ENCODE measurements at regions of chr6 and their contacts with region 1.

Region 1: DNA sequence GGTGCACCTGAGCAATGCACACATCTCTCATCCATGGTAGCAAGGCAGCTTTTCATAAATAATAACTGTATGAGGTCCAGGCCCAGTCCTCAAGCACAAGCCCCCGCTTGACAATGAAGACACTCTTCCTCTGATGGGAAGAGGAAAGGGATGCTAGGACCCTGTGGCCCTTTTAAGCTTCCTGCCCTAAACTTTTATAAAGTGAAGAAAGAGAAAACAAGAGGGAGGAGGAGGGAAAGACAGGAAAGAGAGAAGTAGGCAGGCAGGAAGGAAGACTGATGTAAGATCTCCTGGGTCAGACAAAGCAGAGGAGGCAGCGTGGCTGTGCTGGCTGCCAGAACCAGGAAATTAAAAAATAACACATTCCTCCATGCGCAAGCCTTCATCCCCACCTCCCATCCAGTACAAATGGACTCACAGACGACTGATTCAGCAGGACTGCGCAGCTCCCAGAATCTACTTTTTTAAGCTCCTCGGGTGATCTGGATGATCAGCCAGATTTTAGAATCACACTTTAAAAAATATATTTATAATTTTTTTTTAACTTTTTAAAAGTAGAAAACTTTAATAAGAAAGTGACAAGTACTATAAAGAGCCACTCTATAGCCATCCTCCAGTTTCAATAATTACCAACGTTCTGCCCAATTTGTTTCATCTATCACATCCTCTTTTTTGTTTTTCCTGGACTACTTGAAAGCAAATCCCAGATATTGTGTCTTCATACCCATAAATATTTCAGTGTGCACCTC is 16.5 kb downstream of the TNFAIP3 start:
- DNase-seq: no peak
- H3K4me3 ChIP-seq: no peak overlapping the region
- CTCF ChIP-seq: no peak

Region 2: GRCh38 chr6:137933696-137934095 is 50.1 kb after region 1 on chr6:
- in situ Hi-C with region 1: loop called (anchors 5 kb)
- DNase-seq: peak; percentile 87
- H3K4me3 ChIP-seq: no peak overlapping the region
- CTCF ChIP-seq: no peak

Region 3: GRCh38 chr6:137944793-137945498 is 61.4 kb after region 1 on chr6:
- in situ Hi-C with region 1: no loop called
- DNase-seq: peak; percentile 12
- H3K4me3 ChIP-seq: no peak overlapping the region
- CTCF ChIP-seq: peak; percentile 77